Activated CD8-positive, alpha-beta memory T cell treated with anti-CD3 and anti-CD28 coated beads, Interleukin-2, amount 10 ng/mL, durations not matched to agents 7 days and 5 days (primary cell): ENCODE measurements at regions of chr3 and their contacts with region 1.

Region 1: GRCh38 chr3:50227390-50228183 is 8.4 kb upstream of the GNAI2 start:
- DNase-seq: peak; percentile 96
- ATAC-seq: peak; percentile 89
- H3K4me3 Mint-ChIP-seq: peak overlapping the region; percentile 88
- H3K27ac Mint-ChIP-seq: peak overlapping the region; percentile 94
- H3K4me1 Mint-ChIP-seq: peaks cover 27% of the 10 kb centered on the region
- H3K27me3 Mint-ChIP-seq: peaks cover 14% of the 10 kb centered on the region

Region 2: DNA sequence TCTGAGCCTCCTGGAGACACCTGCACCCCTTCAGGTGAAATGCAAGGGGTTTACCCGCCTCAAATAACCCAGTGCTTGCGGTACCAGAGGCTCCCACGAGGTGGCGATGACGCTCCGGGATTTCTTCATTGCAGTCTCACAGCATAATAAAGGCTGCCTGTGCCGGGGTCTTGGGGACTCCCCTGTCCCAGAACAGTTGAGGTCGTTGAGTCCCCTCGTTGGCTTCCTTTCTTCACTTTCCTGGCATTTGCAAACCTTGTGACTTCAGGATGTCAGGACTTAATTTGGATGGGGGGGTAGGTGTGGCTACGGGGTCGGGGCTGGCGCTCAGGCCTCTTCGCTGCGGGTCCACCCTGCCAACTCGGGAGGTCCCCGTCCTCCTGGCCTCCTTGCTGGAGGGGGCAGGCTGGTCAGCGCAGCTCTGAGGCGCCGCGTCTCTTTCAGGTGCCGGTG is 34.9 kb before region 1 on chr3:
- CTCF ChIA-PET with region 1: interaction called, 398 read pairs
- DNase-seq: peak; percentile 85
- ATAC-seq: peak; percentile 38
- H3K4me3 Mint-ChIP-seq: no peak overlapping the region
- H3K27ac Mint-ChIP-seq: no peak overlapping the region
- H3K4me1 Mint-ChIP-seq: peaks cover 10% of the 10 kb centered on the region
- H3K27me3 Mint-ChIP-seq: peaks cover 25% of the 10 kb centered on the region

Region 3: DNA sequence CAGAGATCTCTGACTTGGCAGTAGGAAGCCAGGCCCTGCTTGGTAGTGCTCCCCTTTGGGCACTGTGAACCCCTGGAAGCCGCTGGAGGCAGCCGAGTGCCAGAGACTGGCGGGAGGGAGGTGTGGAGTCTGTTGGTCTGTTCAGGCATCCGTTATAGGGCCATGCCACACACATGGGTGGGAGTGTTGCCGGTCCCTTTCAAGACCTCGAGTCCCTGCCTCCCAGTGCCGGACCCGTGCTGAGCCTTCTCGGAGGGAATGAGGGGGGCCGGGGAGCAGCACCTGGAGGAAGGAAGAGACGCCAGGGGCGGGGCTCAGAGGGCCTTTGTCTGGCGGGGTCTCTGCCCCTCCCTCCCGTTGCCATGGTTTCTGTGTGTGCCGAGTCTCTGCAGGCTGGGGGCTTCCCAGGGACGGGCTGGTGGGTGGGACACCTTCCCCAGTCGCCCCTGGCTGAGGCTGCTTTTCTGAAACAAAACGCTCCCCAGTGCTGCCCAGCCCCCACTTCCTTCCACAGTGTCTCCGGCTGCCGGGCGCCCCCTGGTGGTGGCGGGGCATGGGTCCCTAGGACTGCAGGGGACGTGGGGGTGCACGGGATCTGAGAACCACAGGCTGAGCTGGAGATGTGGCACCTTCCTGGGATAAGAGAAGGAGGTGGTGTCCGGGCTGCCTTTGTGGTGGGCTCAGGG is 18.4 kb after region 1 on chr3:
- CTCF ChIA-PET with region 1: interaction called, 231 read pairs
- DNase-seq: peak; percentile 96
- ATAC-seq: peak; percentile 80
- H3K4me3 Mint-ChIP-seq: peak overlapping the region; percentile 68
- H3K27ac Mint-ChIP-seq: peak overlapping the region; percentile 91
- H3K4me1 Mint-ChIP-seq: peaks cover 76% of the 10 kb centered on the region
- H3K27me3 Mint-ChIP-seq: no peaks in the 10 kb centered on the region

Region 4: GRCh38 chr3:50267280-50267913 is 39.8 kb after region 1 on chr3:
- CTCF ChIA-PET with region 1: interaction called, 84 read pairs
- DNase-seq: no peak
- ATAC-seq: no peak
- H3K4me3 Mint-ChIP-seq: no peak overlapping the region
- H3K27ac Mint-ChIP-seq: no peak overlapping the region
- H3K4me1 Mint-ChIP-seq: peaks cover 3% of the 10 kb centered on the region
- H3K27me3 Mint-ChIP-seq: peaks cover 30% of the 10 kb centered on the region

Region 5: GRCh38 chr3:50298836-50299637 is 71.5 kb after region 1 on chr3 and contains the starts of genes HYAL3 and NAA80:
- CTCF ChIA-PET with region 1: interaction called, 11 read pairs
- DNase-seq: peak; percentile 100
- ATAC-seq: peak; percentile 84
- H3K4me3 Mint-ChIP-seq: peak within 1 kb of the TSS; percentile 96
- H3K27ac Mint-ChIP-seq: peak within 1 kb of the TSS; percentile 99
- H3K4me1 Mint-ChIP-seq: peaks cover 23% of the 10 kb centered on the region
- H3K27me3 Mint-ChIP-seq: no peaks in the 10 kb centered on the region
- total RNA-seq, gene HYAL3: 13.0 to 14.3 TPM
- total RNA-seq, gene NAA80: 23.1 to 37.3 TPM

Region 6: DNA sequence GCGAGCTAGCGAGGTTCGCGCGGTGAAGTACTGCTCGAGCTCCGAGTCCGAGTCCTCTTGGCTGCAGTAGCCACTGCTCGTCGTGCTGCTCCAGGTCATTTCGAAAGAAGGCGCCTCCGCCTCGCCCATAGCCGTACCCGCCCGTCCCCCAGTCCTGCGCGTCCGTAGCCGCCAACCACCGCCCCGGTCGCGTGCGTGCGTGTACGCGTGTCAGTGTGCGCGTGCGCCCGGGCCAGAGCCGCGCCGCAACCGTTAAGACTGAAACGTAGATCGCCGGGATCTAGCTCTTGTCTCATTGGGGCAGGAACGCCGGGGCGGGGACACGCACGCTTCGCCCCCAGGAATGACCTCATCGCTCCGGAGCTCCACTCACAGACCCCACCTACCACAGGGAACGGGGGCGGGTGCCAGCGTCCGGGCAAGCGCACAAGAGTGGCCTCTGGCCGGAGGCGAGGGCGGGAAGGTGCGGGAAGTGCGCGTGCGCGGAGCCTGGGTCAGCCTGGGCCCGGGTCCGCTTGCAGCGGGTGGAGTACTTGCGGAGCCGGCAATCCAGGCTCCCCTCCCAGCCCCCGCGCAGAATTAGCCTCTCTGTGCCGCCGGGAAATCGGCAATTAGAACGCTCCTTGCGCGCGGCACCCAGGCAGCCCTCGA is 109.7 kb after region 1 on chr3:
- CTCF ChIA-PET with region 1: interaction called, 10 read pairs
- DNase-seq: peak; percentile 99
- ATAC-seq: peak; percentile 74
- H3K4me3 Mint-ChIP-seq: peak overlapping the region; percentile 92
- H3K27ac Mint-ChIP-seq: peak overlapping the region; percentile 94
- H3K4me1 Mint-ChIP-seq: peaks cover 50% of the 10 kb centered on the region
- H3K27me3 Mint-ChIP-seq: no peaks in the 10 kb centered on the region